ENCODE measurements at regions of chr7 and their contacts with region 1.

Region 1: DNA sequence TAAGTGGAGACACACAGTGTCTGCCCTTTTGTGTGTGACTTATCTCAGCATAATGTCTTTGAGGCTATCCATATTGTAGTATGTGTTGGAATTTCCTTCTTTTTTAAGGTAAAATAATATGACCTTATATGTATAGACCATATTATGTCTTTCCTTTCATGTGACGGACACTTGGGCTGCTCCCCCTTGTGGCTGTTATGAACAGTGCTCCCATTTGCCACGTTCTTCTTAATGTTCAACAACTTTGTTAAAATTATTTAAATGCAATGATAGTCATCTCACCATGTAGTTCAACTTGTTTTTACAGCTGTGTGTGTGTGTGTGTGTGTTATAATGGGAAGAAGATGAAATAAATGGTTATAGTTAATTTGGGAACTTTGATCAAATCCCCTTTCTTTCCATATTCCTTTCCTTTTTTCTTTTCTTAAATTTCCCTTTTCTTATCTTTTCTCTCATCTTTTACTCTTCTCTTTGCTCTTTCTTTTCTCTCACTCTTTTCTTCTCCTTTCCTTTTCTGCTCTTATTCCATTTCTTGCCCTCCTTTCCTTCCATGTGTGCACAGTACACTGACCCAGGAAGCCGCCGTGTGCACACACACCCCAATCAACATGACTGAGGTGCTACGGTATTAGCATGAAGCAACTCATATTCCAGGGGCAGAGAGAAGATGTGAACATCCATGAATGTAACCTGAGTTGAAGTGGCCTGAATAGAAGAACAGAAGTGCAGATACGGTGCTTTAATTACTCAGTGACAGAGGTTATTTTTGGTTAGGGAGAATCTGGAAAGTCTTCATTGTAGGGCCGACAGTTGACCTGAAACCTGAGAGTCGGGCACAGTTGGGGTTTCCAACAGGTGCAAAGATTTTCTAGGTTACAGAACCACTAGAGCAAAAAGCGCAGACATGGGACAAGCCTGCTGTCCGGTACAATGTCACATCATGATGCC is 596.7 kb downstream of the SDK1 start:
- DNase-seq: peak; percentile 55
- H3K4me3 ChIP-seq: no peak overlapping the region
- H3K27ac ChIP-seq: no peak overlapping the region
- H3K4me1 ChIP-seq: no peaks in the 10 kb centered on the region
- H3K27me3 ChIP-seq: no peaks in the 10 kb centered on the region

Region 2: DNA sequence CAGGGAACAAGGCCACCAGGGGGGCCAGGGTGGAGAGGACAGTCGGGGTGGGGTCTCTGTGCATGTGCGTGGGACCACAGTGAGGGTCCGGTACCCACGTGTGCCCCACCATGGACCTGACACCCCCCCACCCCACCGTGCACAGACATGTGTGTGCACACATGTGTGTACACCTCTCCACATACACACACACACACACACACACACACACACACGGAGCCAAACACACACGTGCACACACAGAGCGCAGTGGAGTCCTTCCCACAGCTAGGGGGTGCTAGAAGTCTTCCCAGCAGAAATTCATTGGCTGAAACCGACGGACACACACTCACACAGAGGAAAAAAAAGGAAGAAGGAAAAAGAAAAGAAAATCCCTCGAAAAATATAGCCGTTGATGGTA is 1010.8 kb before region 1 on chr7:
- in situ Hi-C with region 1: loop called (anchors 25 kb)
- DNase-seq: peak; percentile 83
- H3K4me3 ChIP-seq: no peak overlapping the region
- H3K27ac ChIP-seq: no peak overlapping the region
- H3K4me1 ChIP-seq: no peaks in the 10 kb centered on the region
- H3K27me3 ChIP-seq: no peaks in the 10 kb centered on the region

Region 3: GRCh38 chr7:3244241-3244814 is 653.4 kb before region 1 on chr7:
- in situ Hi-C with region 1: no loop called
- DNase-seq: peak; percentile 33
- H3K4me3 ChIP-seq: no peak overlapping the region
- H3K27ac ChIP-seq: no peak overlapping the region
- H3K4me1 ChIP-seq: no peaks in the 10 kb centered on the region
- H3K27me3 ChIP-seq: no peaks in the 10 kb centered on the region